PC-3 (cell line): ENCODE measurements at regions of chr12 and their contacts with region 1.

Region 1: DNA sequence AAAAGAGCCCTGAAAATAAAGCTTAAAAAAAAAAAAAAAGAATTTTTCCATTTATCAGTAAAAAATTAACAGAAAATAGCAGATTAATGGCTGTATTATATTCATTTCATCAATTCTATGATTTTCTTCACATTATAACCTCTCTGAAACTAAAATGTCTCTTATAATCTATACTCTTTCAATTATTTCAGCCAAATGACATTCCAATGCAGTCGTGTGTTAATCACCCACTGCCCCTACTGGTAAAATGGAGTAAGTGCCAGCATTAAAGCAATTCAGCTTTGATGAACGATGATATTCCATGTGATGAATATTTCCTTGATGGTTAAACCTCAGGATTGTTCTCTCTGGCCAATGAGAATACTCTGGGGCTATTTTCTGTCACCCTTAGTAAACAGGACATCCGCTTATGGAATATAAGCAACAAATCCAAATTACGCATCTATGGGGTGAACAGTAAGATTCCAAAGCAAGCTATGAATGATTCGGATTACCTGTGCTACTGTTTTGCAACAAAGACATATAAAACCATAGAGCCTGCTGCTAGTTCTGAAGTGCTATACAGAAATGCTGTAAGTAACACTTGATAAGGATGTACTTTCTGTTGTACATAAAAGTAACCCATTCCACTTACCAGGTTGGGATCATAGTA is 20.3 kb upstream of the SYCP3 start:
- DNase-seq: peak; percentile 72
- ATAC-seq: peak; percentile 83
- H3K4me3 ChIP-seq: no peak overlapping the region
- H3K27ac ChIP-seq: no peak overlapping the region
- H3K4me1 ChIP-seq: peaks cover 4% of the 10 kb centered on the region; the same call in 1 of the 2 replicates
- H3K27me3 ChIP-seq: no peaks in the 10 kb centered on the region
- CTCF ChIP-seq: peak; percentile 92

Region 2: GRCh38 chr12:101570047-101570446 is 189.5 kb before region 1 on chr12:
- CTCF ChIA-PET with region 1: no interaction called
- POLR2A ChIA-PET with region 1: interaction called, 4 read pairs
- intact Hi-C with region 1: loop called (anchors 1 kb)
- DNase-seq: peak; percentile 59
- ATAC-seq: peak; percentile 70
- H3K4me3 ChIP-seq: no peak overlapping the region
- H3K27ac ChIP-seq: no peak overlapping the region
- H3K4me1 ChIP-seq: no peaks in the 10 kb centered on the region
- H3K27me3 ChIP-seq: peaks cover 66% of the 10 kb centered on the region
- CTCF ChIP-seq: peak; percentile 69

Region 3: GRCh38 chr12:101670007-101670687 is 89.4 kb before region 1 on chr12:
- CTCF ChIA-PET with region 1: interaction called, 3 read pairs
- POLR2A ChIA-PET with region 1: no interaction called
- intact Hi-C with region 1: loop called (anchors 1 kb)
- DNase-seq: peak; percentile 54
- ATAC-seq: peak; percentile 45; the same call in 1 of the 2 replicates
- H3K4me3 ChIP-seq: no peak overlapping the region
- H3K27ac ChIP-seq: no peak overlapping the region
- H3K4me1 ChIP-seq: no peaks in the 10 kb centered on the region
- H3K27me3 ChIP-seq: peaks cover 37% of the 10 kb centered on the region
- CTCF ChIP-seq: peak; percentile 64

Region 4: DNA sequence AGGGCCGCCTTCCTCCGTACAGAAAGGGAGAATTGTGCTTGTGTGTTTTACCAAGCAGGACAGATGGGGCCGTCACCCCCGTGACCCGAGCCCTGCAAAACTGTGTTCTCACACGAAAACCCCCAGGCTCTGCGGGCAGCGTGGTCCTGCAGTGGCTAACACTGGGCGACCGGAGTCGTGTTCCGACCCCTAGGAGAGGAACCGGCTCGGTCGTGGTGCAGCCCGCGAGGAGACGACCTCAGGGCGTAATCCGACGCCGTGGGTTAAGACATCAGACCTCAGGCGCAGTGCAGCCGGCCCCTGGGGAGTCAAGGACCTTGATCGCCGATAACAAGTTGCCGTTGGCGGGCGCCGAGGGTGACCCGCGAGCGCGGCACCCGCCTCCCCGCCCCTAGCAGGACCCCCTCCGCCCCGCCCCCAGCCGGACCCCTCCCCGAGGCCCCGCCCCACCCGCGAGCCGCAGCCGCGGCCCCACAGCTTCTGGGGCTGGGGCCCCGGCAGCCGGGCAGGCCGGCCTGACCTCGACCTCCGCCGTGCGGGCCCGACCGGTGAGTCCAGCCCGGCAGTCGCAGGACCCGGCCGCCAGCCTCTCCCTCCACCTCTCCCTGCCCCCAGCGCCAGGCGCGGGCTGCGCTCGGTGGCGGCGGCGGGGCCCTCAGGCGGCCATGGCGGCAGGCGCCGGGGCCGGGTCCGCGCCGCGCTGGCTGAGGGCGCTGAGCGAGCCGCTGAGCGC is 62.2 kb before region 1 on chr12 and contains the start of gene CHPT1:
- CTCF ChIA-PET with region 1: interaction called, 17 read pairs
- POLR2A ChIA-PET with region 1: no interaction called
- intact Hi-C with region 1: no loop called
- DNase-seq: peak; percentile 47
- ATAC-seq: peak; percentile 70
- H3K4me3 ChIP-seq: peak within 1 kb of the TSS; percentile 89
- H3K27ac ChIP-seq: no peak within 1 kb of the TSS
- H3K4me1 ChIP-seq: peaks cover 12% of the 10 kb centered on the region
- H3K27me3 ChIP-seq: no peaks in the 10 kb centered on the region
- CTCF ChIP-seq: no peak
- total RNA-seq, gene CHPT1: 55.3 and 56.2 TPM in 2 replicates